ENCODE measurements at regions of chr2 and their contacts with region 1.

Region 1: GRCh38 chr2:64698668-64699444 is 45.1 kb upstream of the SERTAD2 start:
- DNase-seq: no peak
- H3K4me3 Mint-ChIP-seq: peak overlapping the region; percentile 53
- H3K27ac Mint-ChIP-seq: peak overlapping the region; percentile 90
- H3K4me1 Mint-ChIP-seq: peaks cover 60% of the 10 kb centered on the region
- H3K27me3 Mint-ChIP-seq: no peaks in the 10 kb centered on the region

Region 2: GRCh38 chr2:63723709-63724108 is 975.1 kb before region 1 on chr2:
- intact Hi-C with region 1: no loop called
- DNase-seq: no peak
- H3K4me3 Mint-ChIP-seq: no peak overlapping the region
- H3K27ac Mint-ChIP-seq: no peak overlapping the region
- H3K4me1 Mint-ChIP-seq: no peaks in the 10 kb centered on the region
- H3K27me3 Mint-ChIP-seq: peaks cover 3% of the 10 kb centered on the region

Region 3: GRCh38 chr2:63819765-63820717 is 878.8 kb before region 1 on chr2:
- intact Hi-C with region 1: no loop called
- DNase-seq: no peak
- H3K4me3 Mint-ChIP-seq: no peak overlapping the region
- H3K27ac Mint-ChIP-seq: no peak overlapping the region
- H3K4me1 Mint-ChIP-seq: no peaks in the 10 kb centered on the region
- H3K27me3 Mint-ChIP-seq: peaks cover 4% of the 10 kb centered on the region

Region 4: GRCh38 chr2:64675860-64676259 is 23.0 kb before region 1 on chr2:
- intact Hi-C with region 1: loop called (anchors 1 kb)
- DNase-seq: peak; percentile 30
- H3K4me3 Mint-ChIP-seq: no peak overlapping the region
- H3K27ac Mint-ChIP-seq: peak overlapping the region; percentile 56
- H3K4me1 Mint-ChIP-seq: peaks cover 48% of the 10 kb centered on the region
- H3K27me3 Mint-ChIP-seq: no peaks in the 10 kb centered on the region

Region 5: DNA sequence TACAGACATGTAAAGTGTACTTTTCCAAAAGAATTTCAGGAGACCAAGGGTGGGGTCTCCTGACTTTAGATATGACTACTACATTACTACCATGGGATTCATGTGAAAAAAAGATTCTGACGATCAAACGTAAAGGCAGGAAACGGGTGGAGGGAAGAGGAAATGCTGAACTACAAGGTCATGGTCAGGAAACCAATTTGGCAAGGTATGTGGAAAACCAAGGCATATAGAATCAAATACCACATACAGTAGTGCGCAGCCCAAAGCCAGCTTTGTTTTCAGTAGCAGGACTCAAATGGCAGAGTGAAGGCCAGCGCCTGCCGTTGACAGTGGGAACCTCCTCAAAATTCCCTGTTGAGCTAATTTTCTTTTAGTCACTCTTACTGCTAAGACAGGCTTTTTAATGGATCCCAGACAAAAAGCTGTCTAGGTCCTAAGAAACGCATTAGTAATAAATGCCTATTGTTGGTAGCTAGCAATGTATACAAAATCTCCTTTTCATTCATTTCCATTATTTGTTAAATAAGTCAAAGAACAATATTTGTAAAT is 12.5 kb after region 1 on chr2:
- intact Hi-C with region 1: loop called (anchors 1 kb)
- DNase-seq: no peak
- H3K4me3 Mint-ChIP-seq: peak overlapping the region; percentile 19
- H3K27ac Mint-ChIP-seq: no peak overlapping the region
- H3K4me1 Mint-ChIP-seq: peaks cover 23% of the 10 kb centered on the region
- H3K27me3 Mint-ChIP-seq: no peaks in the 10 kb centered on the region

Region 6: GRCh38 chr2:64737547-64737946 is 38.7 kb after region 1 on chr2:
- intact Hi-C with region 1: loop called (anchors 1 kb)
- DNase-seq: no peak
- H3K4me3 Mint-ChIP-seq: peak overlapping the region; percentile 46
- H3K27ac Mint-ChIP-seq: peak overlapping the region; percentile 91
- H3K4me1 Mint-ChIP-seq: peaks cover 54% of the 10 kb centered on the region
- H3K27me3 Mint-ChIP-seq: no peaks in the 10 kb centered on the region

Region 7: GRCh38 chr2:64807417-64807816 is 108.6 kb after region 1 on chr2:
- intact Hi-C with region 1: no loop called
- DNase-seq: peak; percentile 12
- H3K4me3 Mint-ChIP-seq: peak overlapping the region; percentile 57
- H3K27ac Mint-ChIP-seq: peak overlapping the region; percentile 80
- H3K4me1 Mint-ChIP-seq: peaks cover 37% of the 10 kb centered on the region
- H3K27me3 Mint-ChIP-seq: no peaks in the 10 kb centered on the region

Region 8: DNA sequence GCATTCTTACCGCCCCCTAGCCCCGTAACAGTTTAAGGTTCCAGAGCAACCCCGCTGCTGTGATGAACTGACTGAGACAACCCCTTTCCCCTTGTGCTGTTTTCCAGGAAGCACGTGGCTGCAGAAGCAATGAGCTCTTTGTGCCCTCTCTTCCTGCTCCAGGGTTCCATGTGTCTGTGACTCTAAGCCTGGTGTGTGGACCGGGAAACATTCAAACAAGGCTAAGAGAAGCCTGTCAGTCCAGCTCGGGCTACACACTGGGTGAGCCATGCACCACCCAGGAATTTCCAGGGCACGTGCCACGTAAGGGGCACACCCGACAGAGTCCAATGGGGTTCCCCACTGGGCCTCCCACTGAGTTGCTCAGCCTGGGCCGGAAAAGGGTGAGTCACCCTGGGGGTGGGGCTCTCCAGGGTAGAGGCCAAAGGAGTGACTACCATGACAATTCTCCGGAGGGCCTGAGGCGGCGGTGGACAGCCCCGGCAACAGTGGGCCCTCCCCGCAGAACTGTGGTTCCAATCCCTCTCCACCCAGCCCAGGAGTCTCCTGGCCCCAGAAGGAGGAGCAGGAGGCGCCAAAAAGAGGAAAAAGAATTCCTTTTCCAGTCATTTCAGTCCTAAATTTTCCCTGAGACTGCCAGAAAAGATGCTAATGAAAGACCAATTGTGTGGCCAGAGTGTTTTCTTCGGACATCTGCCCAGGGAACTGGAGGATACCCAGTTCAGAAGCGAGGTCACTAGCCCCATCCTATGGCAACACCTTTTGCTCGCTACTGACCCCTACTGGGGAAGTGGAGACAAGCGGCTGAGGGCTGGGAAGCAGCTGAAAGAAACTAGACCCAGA is 132.5 kb after region 1 on chr2:
- intact Hi-C with region 1: loop called (anchors 1 kb)
- DNase-seq: peak; percentile 73
- H3K4me3 Mint-ChIP-seq: no peak overlapping the region
- H3K27ac Mint-ChIP-seq: peak overlapping the region; percentile 73
- H3K4me1 Mint-ChIP-seq: peaks cover 31% of the 10 kb centered on the region
- H3K27me3 Mint-ChIP-seq: peaks cover 1% of the 10 kb centered on the region

Region 9: GRCh38 chr2:64899081-64899865 is 200.4 kb after region 1 on chr2:
- intact Hi-C with region 1: no loop called
- DNase-seq: no peak
- H3K4me3 Mint-ChIP-seq: no peak overlapping the region
- H3K27ac Mint-ChIP-seq: no peak overlapping the region
- H3K4me1 Mint-ChIP-seq: peaks cover 14% of the 10 kb centered on the region
- H3K27me3 Mint-ChIP-seq: peaks cover 30% of the 10 kb centered on the region